ENCODE measurements at regions of chr14 and their contacts with region 1.

Region 1: DNA sequence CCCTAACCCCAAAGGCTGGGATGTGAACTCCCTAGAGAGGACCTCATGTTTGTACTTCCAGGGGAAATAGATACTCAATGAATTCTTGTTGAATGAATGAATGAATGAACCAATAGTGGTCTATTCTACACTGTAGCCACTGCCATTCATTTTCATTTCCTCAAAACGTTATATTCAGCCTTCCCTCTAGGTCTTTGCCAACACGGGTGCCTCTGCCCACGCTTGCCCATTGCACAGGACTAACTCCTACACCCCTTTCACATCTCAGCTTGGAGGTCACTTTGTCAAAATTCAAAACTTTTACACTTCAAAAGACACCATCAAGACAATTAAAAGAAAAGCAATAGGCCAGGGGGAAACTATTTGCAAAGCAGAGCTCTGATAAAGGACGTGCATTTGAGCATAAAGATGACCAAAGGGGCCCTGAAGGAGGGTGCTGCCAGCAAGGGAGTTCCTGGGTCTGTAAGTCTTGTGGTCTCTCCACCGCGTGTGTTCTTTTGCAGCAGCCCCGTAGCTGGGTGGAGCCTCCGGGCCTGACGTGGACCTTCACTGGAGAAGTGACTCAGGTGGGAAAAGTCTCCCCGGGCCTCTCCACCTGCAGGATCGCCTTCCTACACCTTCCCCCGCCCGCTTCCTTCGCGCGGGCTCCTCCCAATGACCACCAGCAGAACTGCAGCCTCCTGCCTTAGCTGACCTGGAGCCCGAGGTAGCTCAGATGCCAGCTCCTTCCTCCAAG is 31.5 kb downstream of the TMEM63C start:
- DNase-seq: peak; percentile 80
- H3K27ac ChIP-seq: no peak overlapping the region
- CTCF ChIP-seq: peak; percentile 71

Region 2: GRCh38 chr14:77151918-77152588 is 61.1 kb before region 1 on chr14:
- CTCF ChIA-PET with region 1: interaction called, 13 read pairs
- POLR2A ChIA-PET with region 1: no interaction called
- DNase-seq: peak; percentile 57
- H3K27ac ChIP-seq: no peak overlapping the region
- CTCF ChIP-seq: 0 out of 2 replicates have a peak, but pooled peaks have one; percentile 8

Region 3: GRCh38 chr14:77306851-77307765 is 94.0 kb after region 1 on chr14:
- CTCF ChIA-PET with region 1: no interaction called
- POLR2A ChIA-PET with region 1: no interaction called
- DNase-seq: no peak
- H3K27ac ChIP-seq: peak overlapping the region; percentile 70
- CTCF ChIP-seq: no peak